CD4-positive, alpha-beta T cell (primary cell): ENCODE measurements at regions of chr19 and their contacts with region 1.

Region 1: DNA sequence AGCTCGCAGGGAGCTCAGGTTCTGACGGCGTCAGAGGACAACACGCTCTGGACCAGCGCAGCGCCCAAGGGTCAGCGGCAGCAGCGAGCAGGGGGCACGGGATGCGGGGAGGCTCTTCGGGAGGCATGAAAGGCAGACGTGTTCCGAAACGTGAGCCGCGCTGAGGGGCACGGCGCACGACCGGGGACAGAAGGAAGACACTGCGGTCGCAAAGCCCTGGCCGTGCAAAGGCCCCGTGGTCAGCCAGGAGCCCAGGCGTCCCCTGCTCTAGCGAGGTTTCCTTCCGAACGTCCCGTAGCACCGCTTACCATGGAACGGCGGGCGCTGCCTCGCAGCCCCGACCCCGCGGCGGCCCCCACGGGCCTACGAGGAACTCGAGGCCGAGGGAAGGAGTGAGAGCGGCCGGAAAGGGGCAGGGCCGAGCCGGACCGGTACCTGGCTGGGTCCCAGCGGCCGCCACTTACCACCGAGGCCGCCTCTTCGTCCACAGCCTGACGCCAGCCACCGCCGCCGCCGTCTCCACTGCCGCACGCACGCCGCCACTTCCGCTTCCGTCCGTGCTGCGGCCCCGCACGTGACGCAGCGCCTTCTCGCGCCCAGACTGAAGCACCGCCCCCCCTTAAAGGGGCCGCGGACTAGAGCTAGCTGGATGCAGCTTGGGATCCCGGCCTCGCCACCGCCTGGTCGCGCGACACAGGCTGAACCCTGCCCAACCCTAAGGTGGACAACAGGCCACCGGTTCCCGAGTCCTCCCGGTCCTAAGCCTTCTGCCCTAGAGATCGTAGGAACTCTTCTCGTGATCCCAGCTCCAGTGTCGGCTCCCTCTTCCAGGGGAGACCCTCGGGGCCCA is 9.4 kb downstream of the ABHD17A start:
- DNase-seq: peak; percentile 74 to 95 (median 83)
- ATAC-seq: peak; percentile 83
- H3K4me3 ChIP-seq: peak overlapping the region; percentile 98
- H3K4me3 Mint-ChIP-seq: peak overlapping the region; percentile 91
- H3K27ac ChIP-seq: peak overlapping the region; percentile 90 to 93
- H3K27ac Mint-ChIP-seq: peak overlapping the region; percentile 91
- H3K4me1 ChIP-seq: peaks cover 47% of the 10 kb centered on the region
- H3K4me1 Mint-ChIP-seq: peaks cover 20% of the 10 kb centered on the region
- H3K27me3 ChIP-seq: no peaks in the 10 kb centered on the region
- H3K27me3 Mint-ChIP-seq: no peaks in the 10 kb centered on the region
- CTCF ChIP-seq: no peak

Region 2: DNA sequence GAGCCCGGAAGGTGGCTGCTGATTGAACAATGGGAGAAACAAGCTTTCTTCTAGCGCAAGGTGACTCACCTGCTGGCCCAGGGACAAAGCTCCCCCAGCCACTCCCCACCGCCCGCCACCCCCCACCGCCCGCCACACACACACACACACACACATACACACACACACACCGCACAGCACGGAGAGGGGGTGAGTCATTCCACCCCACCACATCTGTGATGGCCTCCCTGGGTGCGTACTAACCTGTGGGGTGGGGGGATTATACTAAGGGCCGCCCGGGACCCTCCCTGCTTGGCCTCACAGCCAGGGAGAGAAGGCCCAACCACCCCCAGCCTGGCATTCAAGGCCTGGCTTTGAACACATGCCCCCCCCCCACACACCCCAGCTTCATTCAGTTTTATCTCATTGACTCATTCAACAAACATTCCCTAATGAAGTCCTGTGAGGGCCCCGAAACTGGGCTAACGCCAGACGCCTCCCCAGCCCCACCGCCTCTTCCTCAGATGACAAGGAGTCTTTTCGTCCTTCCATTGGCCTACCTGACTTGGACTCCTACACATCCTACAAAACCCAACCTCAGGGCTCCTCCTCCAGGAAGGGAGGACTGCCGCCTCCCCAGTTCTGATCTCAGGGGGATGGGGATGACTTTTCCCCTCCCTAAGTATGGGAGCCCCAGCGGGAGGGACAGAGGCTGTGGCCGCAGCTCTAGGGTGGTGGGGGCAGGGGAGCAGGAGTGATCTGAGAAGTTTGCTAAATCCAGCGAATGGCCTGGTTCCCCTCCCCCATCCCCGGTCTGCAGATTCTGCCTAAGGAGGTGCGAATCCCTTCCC is 128.4 kb before region 1 on chr19:
- CTCF ChIA-PET with region 1: no interaction called
- POLR2A ChIA-PET with region 1: no interaction called
- intact Hi-C with region 1: no loop called
- DNase-seq: peak in 9 of 14 experiments; percentile 11 to 57 (median 34)
- ATAC-seq: peak; percentile 61
- H3K4me3 ChIP-seq: no peak overlapping the region
- H3K4me3 Mint-ChIP-seq: no peak overlapping the region
- H3K27ac ChIP-seq: no peak overlapping the region
- H3K27ac Mint-ChIP-seq: no peak overlapping the region
- H3K4me1 ChIP-seq: peaks cover 39% of the 10 kb centered on the region
- H3K4me1 Mint-ChIP-seq: peaks cover 9% of the 10 kb centered on the region
- H3K27me3 ChIP-seq: peaks cover 76 to 82% of the 10 kb centered on the region in 2 experiments
- H3K27me3 Mint-ChIP-seq: peaks cover 62% of the 10 kb centered on the region
- CTCF ChIP-seq: no peak

Region 3: GRCh38 chr19:1780272-1780958 is 95.5 kb before region 1 on chr19:
- CTCF ChIA-PET with region 1: no interaction called
- POLR2A ChIA-PET with region 1: no interaction called
- intact Hi-C with region 1: no loop called
- DNase-seq: no peak
- ATAC-seq: no peak
- H3K4me3 ChIP-seq: no peak overlapping the region
- H3K4me3 Mint-ChIP-seq: no peak overlapping the region
- H3K27ac ChIP-seq: no peak overlapping the region
- H3K27ac Mint-ChIP-seq: no peak overlapping the region
- H3K4me1 ChIP-seq: no peaks in the 10 kb centered on the region
- H3K4me1 Mint-ChIP-seq: no peaks in the 10 kb centered on the region
- H3K27me3 ChIP-seq: peaks cover 65 to 70% of the 10 kb centered on the region in 2 experiments
- H3K27me3 Mint-ChIP-seq: peaks cover 69% of the 10 kb centered on the region
- CTCF ChIP-seq: no peak

Region 4: GRCh38 chr19:1837625-1838105 is 38.2 kb before region 1 on chr19:
- CTCF ChIA-PET with region 1: no interaction called
- POLR2A ChIA-PET with region 1: no interaction called
- intact Hi-C with region 1: no loop called
- DNase-seq: peak; percentile 33 to 72 (median 54)
- ATAC-seq: peak; percentile 85
- H3K4me3 ChIP-seq: no peak overlapping the region
- H3K4me3 Mint-ChIP-seq: no peak overlapping the region
- H3K27ac ChIP-seq: no peak overlapping the region
- H3K27ac Mint-ChIP-seq: no peak overlapping the region
- H3K4me1 ChIP-seq: peaks cover 59% of the 10 kb centered on the region
- H3K4me1 Mint-ChIP-seq: peaks cover 20% of the 10 kb centered on the region
- H3K27me3 ChIP-seq: no peaks in the 10 kb centered on the region
- H3K27me3 Mint-ChIP-seq: no peaks in the 10 kb centered on the region
- CTCF ChIP-seq: peak; percentile 81

Region 5: DNA sequence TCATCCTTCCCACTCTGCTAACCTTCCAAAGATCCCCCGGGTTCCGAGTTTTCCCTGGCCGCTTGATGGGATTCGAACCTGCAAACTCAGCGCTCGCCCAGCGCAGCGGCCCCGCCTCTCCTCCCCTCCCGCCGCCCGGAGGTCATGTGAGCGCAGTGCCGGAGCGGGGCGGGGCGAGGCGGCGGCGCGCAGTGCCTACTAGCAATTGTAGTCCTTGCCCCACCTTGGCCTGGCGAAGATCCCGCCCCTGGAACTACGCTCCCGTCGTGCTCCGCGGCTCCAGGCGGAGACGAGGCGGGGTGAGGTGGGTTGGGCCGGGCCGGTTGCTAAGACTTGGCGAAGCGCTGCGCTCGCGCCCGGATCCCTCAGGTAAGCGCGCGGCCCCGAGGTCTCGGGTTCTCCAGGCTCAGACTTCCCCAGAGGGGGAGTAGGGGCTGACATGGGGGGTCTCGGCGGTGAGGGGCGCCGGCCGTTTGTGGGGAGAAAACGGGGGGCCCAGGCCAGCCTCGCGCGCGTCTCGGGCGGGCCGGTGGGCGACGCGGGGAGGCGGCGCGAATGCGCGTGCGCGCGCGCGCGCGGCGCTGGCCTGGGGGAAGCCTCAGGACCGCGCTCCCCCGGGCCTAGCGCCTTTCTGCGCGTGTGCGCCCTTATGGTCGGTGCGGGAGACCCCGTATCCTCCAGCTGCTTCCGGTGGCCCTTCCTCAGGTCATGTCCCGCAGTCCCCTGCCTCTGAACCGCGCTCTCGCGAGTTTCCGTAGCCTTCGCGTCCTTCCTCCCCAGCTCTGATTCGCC is 29.4 kb after region 1 on chr19 and contains the starts of genes ADAT3 and SCAMP4:
- CTCF ChIA-PET with region 1: interaction called, 3 read pairs
- POLR2A ChIA-PET with region 1: interaction called, 6 read pairs
- intact Hi-C with region 1: loop called in 1 of 2 experiments (anchors 2 kb)
- DNase-seq: peak; percentile 97 to 99 (median 99)
- ATAC-seq: peak; percentile 98
- H3K4me3 ChIP-seq: peak within 1 kb of the TSS; percentile 65
- H3K4me3 Mint-ChIP-seq: peak within 1 kb of the TSS; percentile 93
- H3K27ac ChIP-seq: peak within 1 kb of the TSS; percentile 72
- H3K27ac Mint-ChIP-seq: peak within 1 kb of the TSS; percentile 78
- H3K4me1 ChIP-seq: peaks cover 51% of the 10 kb centered on the region
- H3K4me1 Mint-ChIP-seq: peaks cover 40% of the 10 kb centered on the region
- H3K27me3 ChIP-seq: no peaks in the 10 kb centered on the region
- H3K27me3 Mint-ChIP-seq: no peaks in the 10 kb centered on the region
- CTCF ChIP-seq: no peak
- total RNA-seq, gene ADAT3: 7.9 to 8.2 TPM
- total RNA-seq, gene SCAMP4: 12.7 to 15.4 TPM